ENCODE measurements at regions of chr19 and their contacts with region 1.

Region 1: DNA sequence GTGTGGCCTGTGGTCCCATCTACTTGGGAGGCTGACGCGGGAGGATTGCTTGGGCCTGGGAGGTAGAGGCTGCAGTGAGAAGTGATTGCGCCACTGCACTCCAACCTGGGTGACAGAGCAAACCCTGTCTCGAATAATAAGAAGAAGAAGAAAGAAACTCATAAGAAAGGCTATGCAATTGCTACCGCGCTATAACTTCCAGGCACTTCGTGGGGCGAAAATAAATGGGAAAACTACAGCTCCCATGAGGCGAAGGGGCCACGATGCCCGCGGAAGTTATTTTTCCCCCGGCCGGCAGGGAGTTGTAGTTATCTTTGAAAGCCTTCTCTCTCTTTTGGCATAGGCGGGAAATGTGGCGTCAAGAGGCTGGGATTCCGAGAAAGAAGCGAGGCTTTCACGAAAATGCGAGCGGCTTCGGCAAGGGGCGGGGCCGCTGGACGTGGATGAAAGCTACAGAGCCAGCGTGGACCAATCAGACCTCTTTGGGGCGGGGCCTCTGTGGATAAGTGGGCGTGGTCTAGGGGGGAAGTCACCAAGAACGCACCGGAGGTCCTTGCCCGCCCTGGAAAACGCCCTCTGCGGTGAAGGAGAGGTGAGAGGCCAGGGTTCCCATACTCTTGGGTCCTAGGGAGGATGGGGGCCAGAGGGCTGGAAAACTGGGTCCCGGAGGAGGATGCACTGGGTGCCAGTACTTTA is at the start of gene NUCB1:
- DNase-seq: peak; percentile 99
- H3K4me3 Mint-ChIP-seq: peak within 1 kb of the TSS; percentile 93
- H3K27ac Mint-ChIP-seq: peak within 1 kb of the TSS; percentile 96
- H3K4me1 Mint-ChIP-seq: peaks cover 32% of the 10 kb centered on the region
- H3K27me3 Mint-ChIP-seq: peaks cover 5% of the 10 kb centered on the region
- total RNA-seq, gene NUCB1: 117 and 122 TPM in 2 replicates

Region 2: GRCh38 chr19:48646001-48646721 is 253.8 kb before region 1 on chr19 and contains the start of gene CA11:
- intact Hi-C with region 1: loop called (anchors 1 kb)
- DNase-seq: peak; percentile 88
- H3K4me3 Mint-ChIP-seq: peak within 1 kb of the TSS; percentile 87
- H3K27ac Mint-ChIP-seq: peak within 1 kb of the TSS; percentile 88
- H3K4me1 Mint-ChIP-seq: peaks cover 22% of the 10 kb centered on the region
- H3K27me3 Mint-ChIP-seq: peaks cover 6% of the 10 kb centered on the region
- total RNA-seq, gene CA11: 13.0 and 13.9 TPM in 2 replicates

Region 3: GRCh38 chr19:48795055-48795684 is 104.8 kb before region 1 on chr19:
- intact Hi-C with region 1: loop called (anchors 1 kb)
- DNase-seq: peak; percentile 79
- H3K4me3 Mint-ChIP-seq: peak overlapping the region; percentile 89
- H3K27ac Mint-ChIP-seq: peak overlapping the region; percentile 87
- H3K4me1 Mint-ChIP-seq: peaks cover 7% of the 10 kb centered on the region
- H3K27me3 Mint-ChIP-seq: no peaks in the 10 kb centered on the region

Region 4: DNA sequence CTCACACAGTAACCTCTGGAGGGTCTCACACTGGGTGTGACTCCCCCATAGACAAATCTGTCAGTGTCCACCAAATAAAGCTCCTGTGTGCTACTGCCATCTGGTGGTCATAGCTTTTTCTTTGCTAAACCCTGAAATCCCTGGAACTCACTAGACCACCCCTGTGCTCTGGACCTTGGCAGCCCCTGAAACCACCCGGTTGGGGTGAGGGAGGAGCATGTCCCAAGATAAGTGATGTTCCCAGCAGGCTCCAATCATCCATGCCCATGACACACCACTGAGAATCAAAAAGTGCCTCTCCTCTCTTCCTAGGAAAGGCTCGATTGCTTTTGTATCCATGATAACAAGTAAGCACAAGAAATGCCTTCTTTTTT is 57.2 kb before region 1 on chr19:
- intact Hi-C with region 1: no loop called
- DNase-seq: peak; percentile 22
- H3K4me3 Mint-ChIP-seq: no peak overlapping the region
- H3K27ac Mint-ChIP-seq: no peak overlapping the region
- H3K4me1 Mint-ChIP-seq: no peaks in the 10 kb centered on the region
- H3K27me3 Mint-ChIP-seq: peaks cover under 1% of the 10 kb centered on the region

Region 5: DNA sequence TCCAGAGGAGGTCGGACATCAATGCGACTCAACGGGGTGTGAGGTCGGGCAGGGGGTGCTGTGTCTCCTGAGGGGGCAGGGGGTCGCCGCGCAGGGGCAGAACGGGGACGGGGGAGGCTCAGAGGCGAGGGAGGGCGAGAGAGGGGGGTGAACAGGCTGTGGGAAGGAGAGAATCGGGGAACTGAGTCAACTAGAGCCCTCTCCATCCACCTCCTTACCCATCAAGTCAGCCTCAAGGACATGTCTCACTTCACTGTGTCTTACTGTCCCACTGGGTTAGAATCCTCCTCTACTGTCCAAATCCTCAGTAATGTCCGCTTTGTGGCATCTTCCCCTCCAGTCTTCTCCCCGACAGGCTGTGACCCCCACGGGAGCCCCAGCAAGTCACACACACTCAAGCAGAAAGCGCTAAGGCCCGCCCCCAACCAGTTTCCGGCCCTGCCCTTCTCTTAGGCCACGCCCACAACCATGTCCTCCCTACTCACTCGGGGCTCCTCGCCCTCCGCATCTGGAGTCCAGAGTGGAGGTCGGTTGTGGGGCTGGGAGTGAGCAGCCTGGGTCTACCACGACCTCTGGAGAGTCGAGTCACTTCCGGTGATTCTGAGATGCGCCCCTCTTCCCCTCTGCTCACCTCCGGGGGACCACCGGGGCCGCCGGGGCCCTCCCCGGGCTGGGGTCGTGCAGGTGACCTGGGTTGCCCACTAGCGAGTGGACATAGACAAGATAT is 40.8 kb before region 1 on chr19:
- intact Hi-C with region 1: loop called (anchors 1 kb)
- DNase-seq: peak; percentile 70
- H3K4me3 Mint-ChIP-seq: peak overlapping the region; percentile 91
- H3K27ac Mint-ChIP-seq: peak overlapping the region; percentile 91
- H3K4me1 Mint-ChIP-seq: no peaks in the 10 kb centered on the region
- H3K27me3 Mint-ChIP-seq: no peaks in the 10 kb centered on the region

Region 6: DNA sequence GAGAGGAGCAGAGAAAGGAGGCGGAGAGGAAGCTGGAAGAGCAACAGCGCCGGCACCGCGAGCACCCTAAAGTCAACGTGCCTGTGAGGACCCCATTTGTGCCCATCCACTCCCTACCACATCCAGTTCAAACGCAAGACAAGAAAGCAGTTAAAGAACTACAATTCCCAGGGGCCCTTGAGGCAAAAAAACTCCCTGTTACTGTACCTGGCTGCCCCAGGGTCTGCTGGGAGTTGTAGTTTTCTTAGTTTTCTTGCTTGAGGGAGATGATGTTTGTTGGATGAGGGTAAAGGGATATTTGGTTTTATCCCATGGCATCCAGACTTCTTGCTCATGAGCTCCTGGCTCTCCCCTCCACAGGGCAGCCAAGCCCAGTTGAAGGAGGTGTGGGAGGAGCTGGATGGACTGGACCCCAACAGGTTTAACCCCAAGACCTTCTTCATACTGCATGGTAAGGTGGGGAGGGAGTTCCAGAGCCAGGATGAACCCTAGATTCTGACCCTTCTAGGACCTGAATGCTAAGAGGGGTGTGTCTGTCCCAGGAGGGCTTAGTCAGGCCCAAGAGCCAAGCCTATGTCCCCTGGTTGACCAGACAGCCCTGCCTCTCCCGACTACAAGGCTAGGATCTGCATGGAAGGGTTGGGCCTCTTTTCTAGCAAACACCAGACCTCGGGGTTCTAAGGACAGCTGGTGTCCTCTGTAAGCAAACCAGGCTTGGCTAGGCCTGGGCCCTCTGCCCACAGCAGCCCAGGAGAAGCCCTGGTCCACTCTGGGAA is 13.4 kb after region 1 on chr19:
- intact Hi-C with region 1: loop called (anchors 1 kb)
- DNase-seq: no peak
- H3K4me3 Mint-ChIP-seq: no peak overlapping the region
- H3K27ac Mint-ChIP-seq: no peak overlapping the region
- H3K4me1 Mint-ChIP-seq: no peaks in the 10 kb centered on the region
- H3K27me3 Mint-ChIP-seq: no peaks in the 10 kb centered on the region

Region 7: GRCh38 chr19:48954595-48955310 is 54.8 kb after region 1 on chr19 and contains the start of gene BAX:
- intact Hi-C with region 1: loop called (anchors 1 kb)
- DNase-seq: peak; percentile 92
- H3K4me3 Mint-ChIP-seq: peak within 1 kb of the TSS; percentile 95
- H3K27ac Mint-ChIP-seq: peak within 1 kb of the TSS; percentile 95
- H3K4me1 Mint-ChIP-seq: peaks cover 26% of the 10 kb centered on the region
- H3K27me3 Mint-ChIP-seq: no peaks in the 10 kb centered on the region
- total RNA-seq, gene BAX: 292 and 295 TPM in 2 replicates

Region 8: DNA sequence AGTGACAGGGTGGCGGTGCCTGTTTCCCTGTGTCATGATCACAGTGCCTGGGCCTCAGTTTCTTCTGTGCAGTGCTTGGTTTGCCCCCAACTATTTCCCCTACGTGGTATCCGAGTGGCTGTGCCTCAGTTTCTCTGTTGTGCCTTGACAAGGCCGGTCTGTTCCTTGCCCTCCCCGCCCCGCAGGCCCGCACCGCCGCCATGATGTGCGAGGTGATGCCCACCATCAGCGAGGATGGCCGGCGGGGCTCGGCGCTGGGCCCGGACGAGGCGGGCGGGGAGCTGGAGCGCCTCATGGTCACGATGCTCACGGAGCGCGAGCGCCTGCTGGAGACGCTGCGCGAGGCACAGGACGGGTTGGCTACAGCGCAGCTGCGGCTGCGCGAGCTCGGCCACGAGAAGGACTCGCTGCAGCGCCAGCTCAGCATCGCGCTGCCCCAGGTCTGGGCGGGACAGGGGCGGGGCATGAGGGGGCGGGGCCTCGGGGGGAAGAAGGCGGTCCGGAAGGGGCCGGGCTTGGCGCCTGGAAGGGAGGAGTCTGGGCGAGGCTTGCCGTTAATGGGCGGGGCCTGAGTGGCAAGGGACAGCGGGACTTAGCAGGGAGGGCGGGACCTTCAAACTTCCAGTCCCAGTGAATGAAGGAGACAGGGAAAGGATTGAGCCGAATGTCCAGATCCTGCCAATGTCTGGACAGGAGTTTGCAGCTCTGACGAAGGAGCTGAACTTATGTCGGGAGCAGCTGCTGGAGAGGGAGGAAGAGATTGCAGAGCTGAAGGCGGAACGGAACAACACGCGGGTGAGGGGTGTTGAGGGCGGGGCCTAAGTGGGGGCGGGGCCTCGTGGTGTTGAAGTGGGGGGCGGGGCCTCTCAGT is 228.0 kb after region 1 on chr19:
- intact Hi-C with region 1: loop called (anchors 5 kb)
- DNase-seq: peak; percentile 91
- H3K4me3 Mint-ChIP-seq: peak overlapping the region; percentile 88
- H3K27ac Mint-ChIP-seq: peak overlapping the region; percentile 81
- H3K4me1 Mint-ChIP-seq: peaks cover 17% of the 10 kb centered on the region
- H3K27me3 Mint-ChIP-seq: peaks cover 6% of the 10 kb centered on the region